Heart left ventricle (tissue), 16 donors: ENCODE measurements at regions of chr5 and their contacts with region 1.

Region 1: DNA sequence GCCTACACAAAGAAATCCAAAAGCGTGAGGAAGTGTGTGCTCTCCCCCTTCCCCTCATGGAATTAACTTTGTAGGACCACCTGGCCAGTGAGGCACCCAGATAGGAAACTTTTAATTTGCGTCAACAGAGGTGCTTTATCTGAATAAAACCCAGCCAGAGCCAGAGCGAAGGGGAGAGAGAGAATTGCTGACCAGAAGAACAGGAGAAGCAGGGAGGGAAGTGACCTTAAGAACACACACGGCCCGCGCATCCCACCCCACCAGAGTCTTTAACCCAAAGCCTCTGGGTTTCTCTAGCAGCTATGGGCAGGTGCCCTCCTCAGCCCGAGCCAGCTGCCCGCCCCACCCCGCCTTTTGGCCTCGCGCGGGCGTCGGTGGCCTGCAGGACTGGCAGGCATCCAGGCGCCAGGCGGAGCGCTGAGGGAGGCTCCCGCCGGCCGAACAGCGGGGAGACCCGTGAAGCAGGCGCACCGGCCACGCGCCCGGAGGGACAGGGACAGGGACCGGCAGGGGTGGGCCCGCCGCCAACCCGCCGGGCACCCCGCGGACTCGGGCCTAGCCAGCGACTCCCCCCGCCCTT is 580 bp downstream of the ERAP1 start:
- DNase-seq: peak; percentile 85 to 91 (median 87)
- ATAC-seq: peak; percentile 28 to 81 (median 69)
- H3K4me3 ChIP-seq: peak overlapping the region; percentile 65 to 96 (median 88)
- H3K27ac ChIP-seq: peak overlapping the region; percentile 97 to 100 (median 99)
- H3K4me1 ChIP-seq: peaks cover 0 to 54% (median 12%) of the 10 kb centered on the region in 12 donors
- H3K27me3 ChIP-seq: no peaks in the 10 kb centered on the region
- CTCF ChIP-seq: peak in 2 of 12 donors; percentile 4 to 5
- POLR2A ChIP-seq: peak in 1 of 2 donors; percentile 69

Region 2: GRCh38 chr5:96855031-96855872 is 48.1 kb after region 1 on chr5:
- intact Hi-C with region 1: no loop called
- DNase-seq: no peak
- ATAC-seq: peak in 1 of 4 donors; percentile 26
- H3K4me3 ChIP-seq: no peak overlapping the region
- H3K27ac ChIP-seq: no peak overlapping the region
- H3K4me1 ChIP-seq: no peaks in the 10 kb centered on the region
- H3K27me3 ChIP-seq: no peaks in the 10 kb centered on the region
- CTCF ChIP-seq: no peak
- POLR2A ChIP-seq: no peak

Region 3: DNA sequence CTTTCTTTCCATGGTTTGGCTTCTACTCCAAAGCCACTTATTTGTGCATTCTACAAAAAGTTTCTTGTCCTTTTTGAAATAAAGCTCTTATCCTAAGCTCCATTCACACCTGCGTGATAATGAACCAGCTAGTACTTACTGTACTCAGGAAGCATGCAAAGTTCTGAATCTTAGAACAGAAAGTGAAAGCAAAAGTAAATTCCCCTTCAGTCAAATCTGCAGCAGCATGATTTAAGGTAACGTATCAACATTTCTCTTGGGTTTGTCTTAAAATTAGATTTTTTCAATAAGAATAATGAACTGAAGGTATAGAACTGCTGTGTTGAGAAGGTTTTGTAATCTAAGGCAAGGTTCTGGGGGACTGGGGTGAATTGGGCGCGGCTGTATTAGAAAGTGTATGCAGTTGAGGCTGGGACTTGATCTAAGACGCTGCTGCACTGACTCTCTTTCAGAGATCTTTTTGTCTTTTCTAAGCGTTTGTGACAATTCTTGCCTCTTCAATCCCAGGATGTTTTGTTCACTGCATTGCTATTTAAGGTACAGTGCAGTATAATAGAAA is 69.2 kb after region 1 on chr5 and contains the start of gene ERAP2:
- intact Hi-C with region 1: loop called in 7 of 10 experiments (anchors 5 kb)
- DNase-seq: no peak
- ATAC-seq: peak; percentile 52 to 86 (median 70)
- H3K4me3 ChIP-seq: peak within 1 kb of the TSS; percentile 36 to 93 (median 67)
- H3K27ac ChIP-seq: peak within 1 kb of the TSS; percentile 29 to 91 (median 76)
- H3K4me1 ChIP-seq: peaks cover 0 to 49% (median 7%) of the 10 kb centered on the region in 12 donors
- H3K27me3 ChIP-seq: no peaks in the 10 kb centered on the region
- CTCF ChIP-seq: no peak
- POLR2A ChIP-seq: no peak
- total RNA-seq, gene ERAP2: 2.7 to 30.5 (median 7.0) TPM